Activated CD4-positive, alpha-beta T cell treated with anti-CD3 and anti-CD28 coated beads for 36 hours (primary cell): ENCODE measurements at regions of chr17 and their contacts with region 1.

Region 1: GRCh38 chr17:72985881-72986720 is 106.4 kb downstream of the SLC39A11 start:
- DNase-seq: peak; percentile 70
- ATAC-seq: peak; percentile 79
- H3K4me3 Mint-ChIP-seq: no peak overlapping the region
- H3K27ac Mint-ChIP-seq: no peak overlapping the region
- H3K4me1 Mint-ChIP-seq: peaks cover 1% of the 10 kb centered on the region
- H3K27me3 Mint-ChIP-seq: no peaks in the 10 kb centered on the region

Region 2: GRCh38 chr17:72974605-72975232 is 11.4 kb before region 1 on chr17:
- CTCF ChIA-PET with region 1: interaction called, 13 read pairs
- POLR2A ChIA-PET with region 1: no interaction called
- intact Hi-C with region 1: no loop called
- DNase-seq: no peak
- ATAC-seq: no peak
- H3K4me3 Mint-ChIP-seq: no peak overlapping the region
- H3K27ac Mint-ChIP-seq: no peak overlapping the region
- H3K4me1 Mint-ChIP-seq: peaks cover 9% of the 10 kb centered on the region
- H3K27me3 Mint-ChIP-seq: no peaks in the 10 kb centered on the region

Region 3: DNA sequence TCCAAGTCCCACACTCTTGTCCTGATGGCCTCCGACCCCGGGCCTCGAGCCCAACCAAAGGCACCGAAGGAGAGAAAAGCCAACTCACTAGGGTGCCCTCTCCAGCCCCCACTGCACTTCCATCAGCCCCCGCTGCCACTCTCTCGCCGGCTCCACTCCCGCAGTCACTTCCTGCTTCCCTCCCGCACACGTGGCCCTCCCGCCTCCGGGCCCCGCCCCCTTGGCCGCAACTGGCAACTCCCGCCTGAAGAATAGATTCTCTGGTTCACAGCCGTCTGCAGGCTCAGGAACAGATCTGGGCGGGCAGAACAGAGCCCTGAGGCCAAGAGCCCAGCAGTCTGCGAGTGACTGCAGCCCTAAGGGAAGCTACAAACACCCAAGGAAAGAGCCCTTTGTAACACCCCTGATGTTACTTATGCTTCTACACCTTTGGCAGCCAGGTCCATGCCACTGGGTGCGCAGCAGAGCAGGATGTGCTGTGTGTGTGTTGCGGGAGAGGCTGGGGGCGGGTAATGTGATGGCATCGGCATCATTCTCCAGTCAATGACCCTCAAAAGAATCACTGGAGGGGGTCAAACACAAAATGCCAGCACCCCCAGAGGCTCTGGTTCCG is 106.5 kb after region 1 on chr17 and contains the start of gene SLC39A11:
- CTCF ChIA-PET with region 1: no interaction called
- POLR2A ChIA-PET with region 1: no interaction called
- intact Hi-C with region 1: loop called in 1 of 2 experiments (anchors 5 kb)
- DNase-seq: peak; percentile 95
- ATAC-seq: peak; percentile 99
- H3K4me3 Mint-ChIP-seq: peak within 1 kb of the TSS; percentile 94
- H3K27ac Mint-ChIP-seq: peak within 1 kb of the TSS; percentile 87
- H3K4me1 Mint-ChIP-seq: peaks cover 24% of the 10 kb centered on the region
- H3K27me3 Mint-ChIP-seq: peaks cover 2% of the 10 kb centered on the region
- total RNA-seq, gene SLC39A11: 12.5 to 17.2 TPM

Region 4: GRCh38 chr17:73156166-73156840 is 170.2 kb after region 1 on chr17:
- CTCF ChIA-PET with region 1: interaction called, 26 read pairs
- POLR2A ChIA-PET with region 1: no interaction called
- intact Hi-C with region 1: loop called (anchors 1 to 2 kb)
- DNase-seq: peak; percentile 81
- ATAC-seq: peak; percentile 87
- H3K4me3 Mint-ChIP-seq: no peak overlapping the region
- H3K27ac Mint-ChIP-seq: no peak overlapping the region
- H3K4me1 Mint-ChIP-seq: peaks cover 14% of the 10 kb centered on the region
- H3K27me3 Mint-ChIP-seq: peaks cover 17% of the 10 kb centered on the region

Region 5: DNA sequence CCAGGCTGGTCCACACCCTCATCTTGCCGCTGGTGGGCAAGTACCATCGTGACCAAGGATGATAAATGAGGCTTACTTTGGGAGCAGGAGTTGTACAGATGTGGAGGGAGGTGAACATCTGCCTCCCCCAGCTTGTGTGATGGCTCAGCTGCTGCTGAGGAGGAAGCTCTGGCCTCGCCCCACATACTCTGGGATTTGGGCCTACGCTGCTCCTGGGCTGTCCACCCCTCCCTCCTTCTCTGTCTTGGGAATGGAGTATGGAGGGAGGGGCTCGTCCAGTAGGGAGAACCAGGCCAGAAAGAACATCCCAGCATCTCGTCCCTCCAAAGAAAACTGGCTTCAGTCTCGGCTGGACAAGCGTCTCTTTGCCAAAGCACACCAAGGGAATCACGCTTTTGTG is 460.5 kb after region 1 on chr17:
- CTCF ChIA-PET with region 1: no interaction called
- POLR2A ChIA-PET with region 1: no interaction called
- intact Hi-C with region 1: no loop called
- DNase-seq: no peak
- ATAC-seq: no peak
- H3K4me3 Mint-ChIP-seq: no peak overlapping the region
- H3K27ac Mint-ChIP-seq: no peak overlapping the region
- H3K4me1 Mint-ChIP-seq: no peaks in the 10 kb centered on the region
- H3K27me3 Mint-ChIP-seq: no peaks in the 10 kb centered on the region

Region 6: GRCh38 chr17:73803964-73804435 is 817.9 kb after region 1 on chr17:
- CTCF ChIA-PET with region 1: no interaction called
- POLR2A ChIA-PET with region 1: no interaction called
- intact Hi-C with region 1: no loop called
- DNase-seq: no peak
- ATAC-seq: no peak
- H3K4me3 Mint-ChIP-seq: no peak overlapping the region
- H3K27ac Mint-ChIP-seq: no peak overlapping the region
- H3K4me1 Mint-ChIP-seq: peaks cover 8% of the 10 kb centered on the region
- H3K27me3 Mint-ChIP-seq: peaks cover 3% of the 10 kb centered on the region